Transverse colon (tissue), 4 donors: ENCODE measurements at regions of chr9 and their contacts with region 1.

Region 1: GRCh38 chr9:124675261-124676158 is 95.6 kb downstream of the NR6A1 start:
- DNase-seq: no peak
- H3K4me3 ChIP-seq: no peak overlapping the region
- H3K27ac ChIP-seq: peak overlapping the region in 3 of 4 donors; percentile 21 to 43 (median 38)
- H3K4me1 ChIP-seq: peaks cover 0 to 16% (median 5%) of the 10 kb centered on the region in 4 donors
- H3K27me3 ChIP-seq: no peaks in the 10 kb centered on the region
- CTCF ChIP-seq: peak in 1 of 5 experiments; percentile 6
- EP300 ChIP-seq: no peak
- POLR2A ChIP-seq: no peak

Region 2: GRCh38 chr9:124695280-124695890 is 19.9 kb after region 1 on chr9:
- in situ Hi-C with region 1: no loop called
- intact Hi-C with region 1: loop called (anchors 1 kb)
- DNase-seq: no peak
- H3K4me3 ChIP-seq: no peak overlapping the region
- H3K27ac ChIP-seq: no peak overlapping the region
- H3K4me1 ChIP-seq: no peaks in the 10 kb centered on the region
- H3K27me3 ChIP-seq: no peaks in the 10 kb centered on the region
- CTCF ChIP-seq: no peak
- EP300 ChIP-seq: no peak
- POLR2A ChIP-seq: no peak

Region 3: GRCh38 chr9:124906966-124907365 is 231.5 kb after region 1 on chr9:
- in situ Hi-C with region 1: no loop called
- intact Hi-C with region 1: no loop called
- DNase-seq: no peak
- H3K4me3 ChIP-seq: no peak overlapping the region
- H3K27ac ChIP-seq: no peak overlapping the region
- H3K4me1 ChIP-seq: peaks cover 0 to 11% (median 0%) of the 10 kb centered on the region in 4 donors
- H3K27me3 ChIP-seq: no peaks in the 10 kb centered on the region
- CTCF ChIP-seq: no peak
- EP300 ChIP-seq: no peak
- POLR2A ChIP-seq: no peak

Region 4: GRCh38 chr9:125024917-125025316 is 349.4 kb after region 1 on chr9:
- in situ Hi-C with region 1: no loop called
- intact Hi-C with region 1: no loop called
- DNase-seq: no peak
- H3K4me3 ChIP-seq: no peak overlapping the region
- H3K27ac ChIP-seq: peak overlapping the region in 3 of 4 donors; percentile 6 to 48 (median 35)
- H3K4me1 ChIP-seq: peaks cover 0 to 26% (median 7%) of the 10 kb centered on the region in 4 donors
- H3K27me3 ChIP-seq: no peaks in the 10 kb centered on the region
- CTCF ChIP-seq: no peak
- EP300 ChIP-seq: no peak
- POLR2A ChIP-seq: no peak